ENCODE measurements at regions of chr5 and their contacts with region 1.

Region 1: GRCh38 chr5:126531543-126532120 is 63.4 kb downstream of the ALDH7A1 start:
- DNase-seq: no peak
- ATAC-seq: no peak
- H3K4me3 ChIP-seq: no peak overlapping the region
- H3K27ac ChIP-seq: no peak overlapping the region
- H3K4me1 ChIP-seq: no peaks in the 10 kb centered on the region
- H3K27me3 ChIP-seq: no peaks in the 10 kb centered on the region
- CTCF ChIP-seq: no peak
- POLR2A ChIP-seq: no peak
- RAD21 ChIP-seq: no peak

Region 2: GRCh38 chr5:126031989-126032716 is 499.5 kb before region 1 on chr5:
- CTCF ChIA-PET with region 1: no interaction called
- POLR2A ChIA-PET with region 1: no interaction called
- RAD21 ChIA-PET with region 1: no interaction called
- intact Hi-C with region 1: no loop called
- DNase-seq: no peak
- ATAC-seq: no peak
- H3K4me3 ChIP-seq: no peak overlapping the region
- H3K27ac ChIP-seq: no peak overlapping the region
- H3K4me1 ChIP-seq: no peaks in the 10 kb centered on the region
- H3K27me3 ChIP-seq: no peaks in the 10 kb centered on the region
- CTCF ChIP-seq: no peak
- POLR2A ChIP-seq: no peak
- RAD21 ChIP-seq: no peak

Region 3: DNA sequence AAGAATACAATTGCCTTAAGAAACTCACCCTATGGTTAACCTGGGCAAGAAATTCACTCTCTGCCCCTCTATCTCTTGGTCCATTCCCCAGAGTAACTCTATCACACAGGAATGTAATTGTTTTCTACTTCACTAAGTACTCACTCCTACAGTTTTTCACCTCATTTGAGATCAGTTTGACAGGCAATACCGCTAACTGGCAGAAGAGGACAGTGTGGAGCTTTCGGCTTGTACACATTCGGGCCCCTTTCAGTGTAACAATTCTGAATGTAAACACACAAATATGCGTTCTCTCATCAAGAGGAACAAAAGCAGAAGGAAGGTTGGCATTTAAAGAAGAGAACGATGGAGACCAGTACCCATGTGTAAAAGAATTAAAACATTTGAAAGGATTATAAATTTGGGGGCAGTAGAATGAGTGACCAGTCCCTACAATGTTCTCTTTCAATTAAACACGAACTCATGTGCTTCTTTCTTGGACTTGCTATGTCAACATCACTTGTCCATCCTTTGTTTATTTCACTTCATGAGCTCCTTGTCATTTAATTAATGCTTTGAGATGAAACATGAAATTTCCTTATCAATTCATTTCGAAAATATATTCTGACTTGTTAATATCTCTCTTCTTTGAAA is 297.0 kb before region 1 on chr5:
- CTCF ChIA-PET with region 1: interaction called, 3 read pairs
- POLR2A ChIA-PET with region 1: no interaction called
- RAD21 ChIA-PET with region 1: no interaction called
- intact Hi-C with region 1: loop called (anchors 10 kb)
- DNase-seq: peak; percentile 37
- ATAC-seq: peak; percentile 98
- H3K4me3 ChIP-seq: no peak overlapping the region
- H3K27ac ChIP-seq: no peak overlapping the region
- H3K4me1 ChIP-seq: no peaks in the 10 kb centered on the region
- H3K27me3 ChIP-seq: no peaks in the 10 kb centered on the region
- CTCF ChIP-seq: peak; percentile 42 to 96 (median 95); a peak in 5 of 6 replicates
- POLR2A ChIP-seq: no peak
- RAD21 ChIP-seq: peak; percentile 66

Region 4: GRCh38 chr5:126384985-126385384 is 146.6 kb before region 1 on chr5:
- CTCF ChIA-PET with region 1: no interaction called
- POLR2A ChIA-PET with region 1: no interaction called
- RAD21 ChIA-PET with region 1: no interaction called
- intact Hi-C with region 1: no loop called
- DNase-seq: no peak
- ATAC-seq: peak; percentile 80
- H3K4me3 ChIP-seq: 0 out of 4 replicates have a peak overlapping the region, but pooled peaks of 1 of the 2 experiments have one; percentile 1
- H3K27ac ChIP-seq: peak overlapping the region; percentile 6; the same call in 1 of the 2 replicates
- H3K4me1 ChIP-seq: peaks cover 13 to 15% of the 10 kb centered on the region in 2 experiments
- H3K27me3 ChIP-seq: no peaks in the 10 kb centered on the region
- CTCF ChIP-seq: no peak
- POLR2A ChIP-seq: no peak
- RAD21 ChIP-seq: 0 out of 2 replicates have a peak, but pooled peaks have one; percentile 4